BJ (cell line): ENCODE measurements at regions of chr21 and their contacts with region 1.

Region 1: DNA sequence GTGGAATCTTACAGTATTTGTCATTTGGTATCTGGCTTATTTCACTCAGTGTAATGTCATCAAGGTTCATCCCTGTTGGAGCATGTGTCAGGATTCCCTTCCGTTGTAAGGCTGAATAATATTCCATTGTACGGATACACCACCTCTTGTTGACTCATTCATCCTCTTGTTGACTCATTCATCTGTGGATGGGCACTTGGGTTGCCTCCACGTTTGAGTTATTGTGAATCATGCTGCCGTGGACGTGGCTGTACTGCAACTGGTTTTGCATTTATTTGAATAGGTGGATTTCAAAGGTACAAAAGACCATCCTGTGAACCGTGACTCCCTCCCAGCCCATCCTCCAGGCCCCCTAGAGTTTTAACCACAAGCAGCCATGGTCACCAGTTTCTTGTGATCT is 11.9 kb upstream of the TCP10L start:
- DNase-seq: peak; percentile 47
- H3K4me3 ChIP-seq: no peak overlapping the region
- H3K27me3 ChIP-seq: no peaks in the 10 kb centered on the region
- CTCF ChIP-seq: no peak

Region 2: DNA sequence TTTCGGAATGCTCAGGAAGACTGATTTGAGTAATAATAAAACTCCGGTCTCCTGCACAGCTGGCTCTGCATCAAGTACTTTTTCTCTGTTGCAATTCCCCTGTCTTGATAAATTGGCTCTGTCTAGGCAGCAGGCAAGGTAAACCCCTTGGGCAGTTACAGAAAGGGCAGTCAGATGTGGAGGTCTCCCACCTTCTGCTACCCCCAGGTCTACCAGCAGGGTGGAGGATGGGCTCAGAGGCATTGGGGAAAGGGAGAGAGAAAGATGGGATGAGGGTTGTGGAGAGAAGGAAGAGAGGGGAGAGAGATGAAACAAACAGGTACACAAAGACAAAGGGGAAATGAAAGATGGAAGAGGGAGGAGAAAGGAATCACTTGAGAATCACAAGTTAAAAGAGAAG is 475.1 kb before region 1 on chr21:
- CTCF ChIA-PET with region 1: no interaction called
- POLR2A ChIA-PET with region 1: no interaction called
- DNase-seq: no peak
- H3K4me3 ChIP-seq: no peak overlapping the region
- H3K27me3 ChIP-seq: no peaks in the 10 kb centered on the region
- CTCF ChIP-seq: no peak

Region 3: GRCh38 chr21:32392880-32393676 is 204.1 kb before region 1 on chr21 and contains the start of gene URB1:
- CTCF ChIA-PET with region 1: interaction called, 11 read pairs
- POLR2A ChIA-PET with region 1: no interaction called
- DNase-seq: no peak
- H3K4me3 ChIP-seq: peak within 1 kb of the TSS; percentile 58
- H3K27me3 ChIP-seq: no peaks in the 10 kb centered on the region; the same call in 1 of the 2 replicates
- CTCF ChIP-seq: 0 out of 2 replicates have a peak, but pooled peaks have one; percentile 2
- polyA plus RNA-seq, gene URB1: 6.5 and 8.8 TPM in 2 replicates

Region 4: GRCh38 chr21:32403201-32403777 is 193.9 kb before region 1 on chr21:
- CTCF ChIA-PET with region 1: interaction called, 87 read pairs
- POLR2A ChIA-PET with region 1: no interaction called
- DNase-seq: no peak
- H3K4me3 ChIP-seq: no peak overlapping the region
- H3K27me3 ChIP-seq: no peaks in the 10 kb centered on the region; the same call in 1 of the 2 replicates
- CTCF ChIP-seq: peak; percentile 69

Region 5: GRCh38 chr21:32412162-32413014 is 184.8 kb before region 1 on chr21 and contains the start of gene EVA1C:
- CTCF ChIA-PET with region 1: interaction called, 14 read pairs
- POLR2A ChIA-PET with region 1: no interaction called
- DNase-seq: no peak
- H3K4me3 ChIP-seq: peak within 1 kb of the TSS; percentile 70
- H3K27me3 ChIP-seq: no peaks in the 10 kb centered on the region
- CTCF ChIP-seq: no peak
- polyA plus RNA-seq, gene EVA1C: 9.6 and 12.2 TPM in 2 replicates

Region 6: DNA sequence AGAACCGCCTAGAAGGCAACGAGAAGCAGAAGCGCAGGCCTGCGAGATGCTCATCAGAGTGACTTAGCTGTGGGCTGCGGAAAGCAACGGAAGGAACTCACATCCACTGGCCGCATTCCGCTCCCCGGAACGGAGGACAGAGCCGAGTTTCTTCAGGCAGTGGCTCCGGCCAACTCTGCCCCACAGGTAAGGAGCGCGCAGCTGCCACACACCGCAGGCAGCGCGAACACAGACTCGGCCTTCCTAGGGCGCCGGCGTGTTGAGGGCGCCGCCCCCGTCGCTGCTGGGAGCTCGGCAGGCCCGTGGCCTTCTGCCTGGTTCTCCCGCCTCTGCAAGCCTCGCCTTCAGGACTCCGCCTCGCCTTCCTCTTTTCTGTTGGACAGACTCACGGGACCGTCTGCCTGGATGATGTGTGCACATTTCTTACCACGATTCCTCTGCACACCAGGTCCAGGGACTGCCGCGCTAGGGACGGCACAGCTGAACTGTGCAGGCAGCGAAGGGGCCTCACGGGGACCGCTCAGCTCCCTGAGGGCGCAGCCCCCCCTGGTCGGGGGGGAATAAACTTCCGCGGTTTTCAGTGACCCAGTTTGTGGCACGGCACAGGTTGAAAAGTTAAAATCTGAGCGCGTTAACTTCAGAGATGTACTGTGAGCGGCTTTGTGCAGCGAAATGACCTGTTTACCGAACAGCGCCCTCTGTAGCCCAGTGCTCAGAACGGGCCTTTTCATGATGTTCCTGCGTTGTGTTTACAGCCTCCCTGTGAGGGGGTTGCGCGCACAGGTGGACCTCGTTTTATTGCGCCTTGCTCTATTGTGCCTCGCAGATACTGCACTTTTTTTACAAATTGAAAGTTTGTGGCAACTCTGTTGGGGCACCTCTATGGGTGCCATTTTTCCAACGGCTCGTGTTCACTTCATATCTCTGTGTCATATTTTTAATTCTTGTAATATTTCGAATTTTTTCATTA is 27.7 kb before region 1 on chr21:
- CTCF ChIA-PET with region 1: interaction called, 48 read pairs
- POLR2A ChIA-PET with region 1: no interaction called
- DNase-seq: no peak
- H3K4me3 ChIP-seq: peak overlapping the region; percentile 55
- H3K27me3 ChIP-seq: no peaks in the 10 kb centered on the region; the same call in 1 of the 2 replicates
- CTCF ChIP-seq: peak; percentile 91

Region 7: DNA sequence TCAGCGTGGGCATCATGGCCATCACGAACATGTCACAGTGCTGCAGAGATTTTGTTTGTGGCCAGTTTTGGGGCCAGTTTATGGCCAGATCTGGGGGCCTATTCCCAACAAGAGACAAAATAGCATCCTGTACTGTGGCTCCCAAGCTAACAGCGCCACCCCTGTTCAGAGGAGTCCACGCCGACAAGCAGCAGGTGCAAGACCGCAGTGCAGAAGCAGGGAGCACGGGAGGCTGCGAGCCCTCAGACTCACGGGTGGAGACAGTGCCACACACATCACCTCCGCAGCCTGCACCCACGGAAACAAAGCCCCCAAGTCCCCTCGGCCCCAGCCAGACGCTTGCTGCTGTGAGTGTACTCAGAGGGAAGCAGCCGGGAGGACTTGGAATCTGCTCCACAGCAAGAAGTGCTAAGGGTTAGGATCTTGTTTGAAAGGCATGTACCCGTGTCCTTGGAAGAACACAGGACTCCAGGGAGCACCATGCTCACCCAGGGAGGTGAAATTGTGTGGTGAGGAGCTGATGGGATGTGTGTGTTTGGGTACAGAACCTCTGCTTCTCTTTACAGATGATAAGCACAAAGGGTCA is 19.0 kb before region 1 on chr21:
- CTCF ChIA-PET with region 1: interaction called, 14 read pairs
- POLR2A ChIA-PET with region 1: no interaction called
- DNase-seq: no peak
- H3K4me3 ChIP-seq: no peak overlapping the region
- H3K27me3 ChIP-seq: peaks cover 14% of the 10 kb centered on the region
- CTCF ChIP-seq: peak; percentile 44

Region 8: GRCh38 chr21:32612075-32612998 is 15.1 kb after region 1 on chr21 and contains the start of gene CFAP298:
- CTCF ChIA-PET with region 1: interaction called, 12 read pairs
- POLR2A ChIA-PET with region 1: no interaction called
- DNase-seq: peak; percentile 77
- H3K4me3 ChIP-seq: peak within 1 kb of the TSS; percentile 92
- H3K27me3 ChIP-seq: peaks cover 2% of the 10 kb centered on the region; the same call in 1 of the 2 replicates
- CTCF ChIP-seq: no peak
- polyA plus RNA-seq, gene CFAP298: 14.5 and 16.4 TPM in 2 replicates